Activated CD4-positive, alpha-beta T cell treated with anti-CD3 and anti-CD28 coated beads, Interleukin-2, amount 10 ng/mL, durations not matched to agents 24 days and 14 days (primary cell): ENCODE measurements at regions of chr22 and their contacts with region 1.

Region 1: GRCh38 chr22:36528795-36529751 is at the start of gene EIF3D:
- DNase-seq: peak; percentile 99
- H3K4me3 Mint-ChIP-seq: peak within 1 kb of the TSS; percentile 93
- H3K27ac Mint-ChIP-seq: peak within 1 kb of the TSS; percentile 99
- H3K4me1 Mint-ChIP-seq: peaks cover 19% of the 10 kb centered on the region
- H3K27me3 Mint-ChIP-seq: peaks cover 3% of the 10 kb centered on the region
- total RNA-seq, gene EIF3D: 353 and 367 TPM in 2 replicates

Region 2: DNA sequence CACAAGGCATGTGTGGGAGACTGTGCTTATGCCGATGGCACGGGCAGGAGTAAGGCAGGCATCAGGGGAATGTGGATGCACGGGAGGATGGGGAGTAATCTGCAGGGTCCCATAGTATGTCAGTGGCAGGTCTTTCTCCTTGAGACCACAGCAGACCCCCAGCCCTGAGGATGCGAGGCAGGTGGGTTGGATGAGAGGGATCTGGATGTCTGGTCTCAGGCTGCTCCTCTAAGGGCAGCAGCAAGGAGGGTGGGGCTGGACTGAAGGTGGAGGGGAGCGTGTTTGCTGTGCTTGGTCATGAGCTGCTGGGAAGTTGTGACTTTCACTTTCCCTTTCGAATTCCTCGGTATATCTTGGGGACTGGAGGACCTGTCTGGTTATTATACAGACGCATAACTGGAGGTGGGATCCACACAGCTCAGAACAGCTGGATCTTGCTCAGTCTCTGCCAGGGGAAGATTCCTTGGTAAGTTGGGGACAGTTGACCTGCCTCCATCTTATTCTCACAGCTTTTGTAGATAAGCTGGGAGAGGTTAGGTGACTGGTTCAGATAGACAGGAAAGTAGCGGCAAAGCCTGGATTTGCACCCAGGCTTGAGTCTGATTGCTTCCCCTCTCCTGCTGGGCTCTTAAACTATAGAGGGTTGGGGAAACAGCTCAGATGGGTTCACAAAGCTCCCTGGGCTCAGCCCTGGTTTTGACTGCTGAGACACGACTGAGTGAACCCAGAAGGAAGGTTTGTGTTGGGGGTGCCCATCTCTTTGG is 276.1 kb before region 1 on chr22 and contains the start of gene APOL1:
- intact Hi-C with region 1: no loop called
- DNase-seq: peak; percentile 90
- H3K4me3 Mint-ChIP-seq: peak within 1 kb of the TSS; percentile 92
- H3K27ac Mint-ChIP-seq: peak within 1 kb of the TSS; percentile 90
- H3K4me1 Mint-ChIP-seq: peaks cover 55% of the 10 kb centered on the region
- H3K27me3 Mint-ChIP-seq: no peaks in the 10 kb centered on the region
- total RNA-seq, gene APOL1: 36.2 and 37.3 TPM in 2 replicates

Region 3: GRCh38 chr22:36454916-36455570 is 74.0 kb before region 1 on chr22:
- intact Hi-C with region 1: loop called (anchors 10 kb)
- DNase-seq: peak; percentile 98
- H3K4me3 Mint-ChIP-seq: peak overlapping the region; percentile 71
- H3K27ac Mint-ChIP-seq: peak overlapping the region; percentile 77
- H3K4me1 Mint-ChIP-seq: peaks cover 41% of the 10 kb centered on the region
- H3K27me3 Mint-ChIP-seq: no peaks in the 10 kb centered on the region

Region 4: GRCh38 chr22:36506637-36507517 is 22.2 kb before region 1 on chr22 and contains the start of gene FOXRED2:
- intact Hi-C with region 1: loop called (anchors 1 kb)
- DNase-seq: peak; percentile 98
- H3K4me3 Mint-ChIP-seq: peak within 1 kb of the TSS; percentile 70
- H3K27ac Mint-ChIP-seq: peak within 1 kb of the TSS; percentile 70
- H3K4me1 Mint-ChIP-seq: peaks cover 10% of the 10 kb centered on the region
- H3K27me3 Mint-ChIP-seq: no peaks in the 10 kb centered on the region
- total RNA-seq, gene FOXRED2: 25.4 and 26.3 TPM in 2 replicates

Region 5: DNA sequence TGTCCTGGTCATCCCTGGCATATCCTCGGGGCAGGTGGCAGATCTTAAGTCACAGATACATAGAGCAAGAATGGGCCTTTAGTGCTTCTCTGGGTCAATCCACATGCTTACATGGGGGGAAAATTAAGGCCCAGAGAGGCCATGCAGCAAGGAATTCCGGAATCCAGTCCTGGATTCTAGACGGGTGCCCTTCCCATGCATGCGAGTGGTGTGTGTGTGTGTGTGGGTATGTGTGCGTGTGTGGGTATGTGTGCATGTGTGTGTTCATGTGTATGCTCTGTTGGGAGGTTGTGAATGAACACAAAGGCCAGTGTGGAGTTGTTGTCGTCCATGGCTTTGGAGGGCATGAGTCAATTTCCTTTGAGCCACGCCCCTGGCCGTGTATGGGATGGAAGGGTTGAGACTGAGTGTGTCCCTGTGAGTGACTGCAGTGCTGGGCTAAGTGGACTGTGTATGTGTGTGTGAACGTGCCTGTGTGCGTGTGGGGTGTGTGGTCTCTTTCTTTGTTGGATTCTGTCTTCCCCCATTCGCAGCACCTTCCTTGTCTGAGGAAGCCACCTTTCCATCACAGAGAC is 33.3 kb after region 1 on chr22:
- intact Hi-C with region 1: no loop called
- DNase-seq: no peak
- H3K4me3 Mint-ChIP-seq: no peak overlapping the region
- H3K27ac Mint-ChIP-seq: peak overlapping the region; percentile 11
- H3K4me1 Mint-ChIP-seq: no peaks in the 10 kb centered on the region
- H3K27me3 Mint-ChIP-seq: peaks cover 28% of the 10 kb centered on the region

Region 6: GRCh38 chr22:36775964-36776669 is 247.0 kb after region 1 on chr22 and contains the start of gene IFT27:
- intact Hi-C with region 1: loop called (anchors 1 kb)
- DNase-seq: peak; percentile 99
- H3K4me3 Mint-ChIP-seq: peak within 1 kb of the TSS; percentile 90
- H3K27ac Mint-ChIP-seq: peak within 1 kb of the TSS; percentile 94
- H3K4me1 Mint-ChIP-seq: peaks cover 24% of the 10 kb centered on the region
- H3K27me3 Mint-ChIP-seq: no peaks in the 10 kb centered on the region
- total RNA-seq, gene IFT27: 26.3 and 28.5 TPM in 2 replicates